K562 (cell line): ENCODE measurements at regions of chr2 and their contacts with region 1.

Region 1: DNA sequence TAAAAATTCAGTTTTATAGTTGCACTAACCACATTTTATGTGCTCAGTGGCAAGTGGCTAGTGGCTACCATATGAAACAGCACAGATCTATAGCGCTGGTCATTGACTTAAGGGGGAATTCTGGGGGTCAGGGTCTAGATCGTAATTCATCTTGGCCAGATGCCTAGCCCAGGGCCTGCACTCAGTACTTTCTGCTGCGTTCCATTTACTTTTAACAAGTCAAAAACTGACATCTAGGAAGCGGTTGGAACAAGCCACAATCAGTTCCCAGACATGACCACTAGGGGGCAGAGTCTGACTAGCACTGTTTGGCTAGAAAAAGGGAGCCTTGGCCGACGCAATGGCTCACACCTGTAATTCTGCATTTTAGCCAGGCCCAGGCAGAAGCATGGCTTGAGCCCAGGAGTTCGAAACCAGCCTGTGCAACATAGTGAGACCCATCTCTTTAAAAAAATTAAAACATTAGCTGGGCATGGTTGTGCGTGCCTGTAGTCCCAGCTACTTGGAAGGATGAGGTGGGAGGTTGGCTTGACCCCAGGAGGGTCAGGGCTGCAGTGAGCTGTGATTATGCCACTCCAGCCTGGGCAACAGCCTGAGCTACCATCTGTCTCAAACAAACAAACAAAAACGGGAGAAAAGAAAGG is 9.0 kb upstream of the TMBIM1 start:
- DNase-seq: peak; percentile 38 to 89 (median 47)
- ATAC-seq: peak; percentile 91
- H3K4me3 ChIP-seq: no peak overlapping the region
- H3K27ac ChIP-seq: peak overlapping the region; percentile 59
- H3K4me1 ChIP-seq: peaks cover 0 to 10% of the 10 kb centered on the region in 2 experiments; a peak in 3 of 5 replicates
- H3K27me3 ChIP-seq: no peaks in the 10 kb centered on the region
- CTCF ChIP-seq: peak; percentile 84 to 92 (median 86)
- EP300 ChIP-seq: no peak
- POLR2A ChIP-seq: no peak
- RAD21 ChIP-seq: peak; percentile 93 to 94

Region 2: DNA sequence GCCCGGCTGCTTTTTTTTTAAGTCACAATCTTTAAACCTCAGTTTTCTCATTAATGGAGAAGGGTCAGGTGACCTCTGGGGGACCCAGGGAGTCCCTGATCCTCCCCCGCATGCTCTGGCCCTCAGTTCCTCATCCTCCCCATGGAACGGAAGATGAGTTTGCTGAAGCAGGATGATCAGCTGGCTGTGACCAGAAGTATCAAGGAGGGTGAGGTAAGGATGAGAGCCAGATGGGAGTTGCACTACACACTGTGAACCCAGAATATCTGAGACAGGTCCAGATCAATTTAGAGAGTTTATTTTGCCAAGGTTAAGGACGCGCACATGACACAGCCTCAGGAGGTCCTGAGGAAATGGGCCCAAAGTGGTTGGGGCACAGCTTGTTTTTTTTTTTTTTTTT is 59.1 kb after region 1 on chr2:
- CTCF ChIA-PET with region 1: interaction called, 13 read pairs
- POLR2A ChIA-PET with region 1: interaction called, 4 read pairs
- in situ Hi-C with region 1: loop called (anchors 5 kb)
- intact Hi-C with region 1: loop called (anchors 1 kb)
- DNase-seq: peak; percentile 35 to 63 (median 40)
- ATAC-seq: peak; percentile 15; the same call in 1 of the 3 replicates
- H3K4me3 ChIP-seq: no peak overlapping the region
- H3K27ac ChIP-seq: no peak overlapping the region
- H3K4me1 ChIP-seq: peaks cover 25 to 36% of the 10 kb centered on the region in 2 experiments; a peak in 4 of 5 replicates
- H3K27me3 ChIP-seq: no peaks in the 10 kb centered on the region
- CTCF ChIP-seq: no peak
- EP300 ChIP-seq: no peak
- POLR2A ChIP-seq: no peak
- RAD21 ChIP-seq: no peak

Region 3: GRCh38 chr2:218466016-218466521 is 164.8 kb after region 1 on chr2:
- CTCF ChIA-PET with region 1: no interaction called
- POLR2A ChIA-PET with region 1: no interaction called
- in situ Hi-C with region 1: no loop called
- intact Hi-C with region 1: loop called (anchors 5 kb)
- DNase-seq: peak in 1 of 4 experiments; percentile 12
- ATAC-seq: peak; percentile 67
- H3K4me3 ChIP-seq: no peak overlapping the region
- H3K27ac ChIP-seq: no peak overlapping the region
- H3K4me1 ChIP-seq: peaks cover 0 to under 1% of the 10 kb centered on the region in 2 experiments; a peak in 1 of 5 replicates
- H3K27me3 ChIP-seq: no peaks in the 10 kb centered on the region
- CTCF ChIP-seq: peak; percentile 17 to 52 (median 29); a peak in 3 of 6 replicates
- EP300 ChIP-seq: no peak
- POLR2A ChIP-seq: no peak
- RAD21 ChIP-seq: peak; percentile 34 to 56

Region 4: GRCh38 chr2:218516614-218517013 is 215.3 kb after region 1 on chr2:
- CTCF ChIA-PET with region 1: no interaction called
- POLR2A ChIA-PET with region 1: no interaction called
- in situ Hi-C with region 1: no loop called
- intact Hi-C with region 1: loop called (anchors 2 kb)
- DNase-seq: peak; percentile 31 to 34 (median 32)
- ATAC-seq: peak; percentile 81
- H3K4me3 ChIP-seq: no peak overlapping the region
- H3K27ac ChIP-seq: no peak overlapping the region
- H3K4me1 ChIP-seq: no peaks in the 10 kb centered on the region
- H3K27me3 ChIP-seq: no peaks in the 10 kb centered on the region
- CTCF ChIP-seq: peak; percentile 37 to 43 (median 37); a peak in 4 of 6 replicates
- EP300 ChIP-seq: no peak
- POLR2A ChIP-seq: no peak
- RAD21 ChIP-seq: peak in 1 of 2 experiments; percentile 18; a peak in 2 of 4 replicates